ENCODE measurements at regions of chr14 and their contacts with region 1.

Region 1: DNA sequence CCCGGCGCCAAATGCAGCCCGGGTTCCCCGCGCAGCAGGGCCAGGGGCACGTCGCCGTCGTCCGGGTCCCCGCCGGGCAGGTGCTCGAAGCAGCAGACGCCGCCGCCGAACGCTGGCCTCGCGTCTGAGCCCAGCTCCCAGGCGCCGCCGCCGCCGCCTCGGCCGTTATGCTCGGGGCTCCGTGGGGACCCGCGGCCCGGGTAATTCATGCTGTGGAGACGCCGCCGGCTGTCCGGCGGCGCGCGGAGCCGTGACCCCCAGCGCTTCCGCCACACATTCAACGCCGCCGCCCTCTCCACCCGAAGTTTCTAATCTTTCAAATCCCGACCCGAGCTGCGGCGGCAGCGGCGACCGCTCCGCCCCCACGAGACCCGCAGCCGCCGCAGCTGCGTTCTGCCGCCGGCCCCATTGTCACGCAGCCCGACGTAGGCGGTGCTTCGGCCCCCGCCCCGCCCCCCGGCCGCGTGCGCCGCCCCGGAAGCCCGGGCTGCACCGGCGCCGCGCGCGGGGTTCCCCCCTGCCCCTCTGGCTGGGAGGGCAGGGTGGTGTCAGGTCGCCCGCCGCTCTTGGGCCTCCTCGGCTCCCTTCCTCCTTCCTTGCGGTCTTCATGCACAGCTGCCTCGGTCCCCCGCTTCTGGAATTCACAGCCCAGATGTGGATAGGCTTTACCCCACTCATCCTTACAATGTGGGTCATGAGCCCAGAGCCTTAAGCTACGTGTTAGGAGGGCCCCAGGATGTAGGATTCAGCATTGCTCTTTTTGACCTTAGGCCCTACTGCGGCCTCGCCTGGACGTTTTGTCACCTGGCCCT is at the start of gene DDHD1:
- DNase-seq: peak; percentile 78
- ATAC-seq: peak; percentile 77
- H3K4me3 Mint-ChIP-seq: peak within 1 kb of the TSS; percentile 81
- H3K27ac Mint-ChIP-seq: peak within 1 kb of the TSS; percentile 90
- H3K4me1 Mint-ChIP-seq: peaks cover 31% of the 10 kb centered on the region
- H3K27me3 Mint-ChIP-seq: peaks cover 10% of the 10 kb centered on the region
- CTCF ChIP-seq: no peak
- total RNA-seq, gene DDHD1: 16.1 to 20.0 TPM (median 17.2 TPM) in 3 replicates

Region 2: DNA sequence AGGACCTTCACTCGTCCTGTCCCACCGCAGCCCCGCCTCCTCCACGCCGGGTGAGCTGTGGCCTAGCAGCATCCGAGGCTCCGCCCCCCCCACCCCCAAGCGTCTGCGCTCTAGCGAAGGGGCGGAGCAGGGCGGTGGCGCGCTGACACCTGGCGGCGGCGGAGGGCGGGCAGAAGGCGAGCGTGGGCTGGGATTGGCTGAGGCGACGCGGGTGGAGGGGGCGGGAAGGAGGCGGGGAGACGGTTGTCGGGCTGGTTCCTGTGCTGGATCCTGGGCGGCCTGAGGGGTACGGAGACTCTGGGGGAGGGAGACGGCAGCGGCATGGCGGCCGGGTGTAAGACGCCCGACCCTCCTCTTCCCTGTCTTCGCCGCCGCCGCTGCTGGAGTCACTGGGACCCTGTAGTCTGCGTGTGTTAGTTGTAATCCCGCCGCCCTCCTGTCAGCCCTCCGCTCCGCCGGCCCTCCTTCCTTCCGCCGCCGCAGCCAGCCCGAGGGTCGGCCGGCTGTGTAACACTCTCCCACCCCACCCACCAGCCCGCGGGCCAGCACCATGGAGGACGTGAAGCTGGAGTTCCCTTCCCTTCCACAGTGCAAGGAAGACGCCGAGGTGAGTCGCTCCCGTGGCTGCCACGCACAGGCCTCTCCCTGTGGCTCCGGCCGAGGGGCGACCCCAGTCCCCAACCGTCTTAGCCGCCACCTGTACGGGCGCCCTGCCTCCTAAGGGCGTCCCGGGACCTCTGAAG is 423.0 kb before region 1 on chr14 and contains the start of gene STYX:
- CTCF ChIA-PET with region 1: no interaction called
- POLR2A ChIA-PET with region 1: interaction called, 11 read pairs
- DNase-seq: peak; percentile 100
- ATAC-seq: peak; percentile 95
- H3K4me3 Mint-ChIP-seq: peak within 1 kb of the TSS; percentile 99
- H3K27ac Mint-ChIP-seq: peak within 1 kb of the TSS; percentile 100
- H3K4me1 Mint-ChIP-seq: peaks cover 40% of the 10 kb centered on the region
- H3K27me3 Mint-ChIP-seq: no peaks in the 10 kb centered on the region
- CTCF ChIP-seq: no peak
- total RNA-seq, gene STYX: 21.1 to 22.8 TPM (median 21.4 TPM) in 3 replicates

Region 3: GRCh38 chr14:53113989-53114388 is 39.1 kb before region 1 on chr14:
- CTCF ChIA-PET with region 1: no interaction called
- POLR2A ChIA-PET with region 1: no interaction called
- DNase-seq: no peak
- ATAC-seq: peak; percentile 16; the same call in 1 of the 2 replicates
- H3K4me3 Mint-ChIP-seq: no peak overlapping the region
- H3K27ac Mint-ChIP-seq: no peak overlapping the region
- H3K4me1 Mint-ChIP-seq: peaks cover 18% of the 10 kb centered on the region
- H3K27me3 Mint-ChIP-seq: no peaks in the 10 kb centered on the region
- CTCF ChIP-seq: no peak

Region 4: GRCh38 chr14:53180268-53181221 is 27.4 kb after region 1 on chr14:
- CTCF ChIA-PET with region 1: interaction called, 10 read pairs
- POLR2A ChIA-PET with region 1: interaction called, 3 read pairs
- DNase-seq: peak; percentile 68
- ATAC-seq: peak; percentile 97
- H3K4me3 Mint-ChIP-seq: no peak overlapping the region
- H3K27ac Mint-ChIP-seq: no peak overlapping the region
- H3K4me1 Mint-ChIP-seq: peaks cover 37% of the 10 kb centered on the region
- H3K27me3 Mint-ChIP-seq: no peaks in the 10 kb centered on the region
- CTCF ChIP-seq: 0 out of 2 replicates have a peak, but pooled peaks have one; percentile 40

Region 5: GRCh38 chr14:53217295-53217994 is 64.3 kb after region 1 on chr14:
- CTCF ChIA-PET with region 1: interaction called, 20 read pairs
- POLR2A ChIA-PET with region 1: interaction called, 9 read pairs
- DNase-seq: peak; percentile 93
- ATAC-seq: peak; percentile 99
- H3K4me3 Mint-ChIP-seq: peak overlapping the region; percentile 78
- H3K27ac Mint-ChIP-seq: no peak overlapping the region; the same call in 1 of the 2 replicates
- H3K4me1 Mint-ChIP-seq: peaks cover 5% of the 10 kb centered on the region
- H3K27me3 Mint-ChIP-seq: no peaks in the 10 kb centered on the region
- CTCF ChIP-seq: no peak

Region 6: DNA sequence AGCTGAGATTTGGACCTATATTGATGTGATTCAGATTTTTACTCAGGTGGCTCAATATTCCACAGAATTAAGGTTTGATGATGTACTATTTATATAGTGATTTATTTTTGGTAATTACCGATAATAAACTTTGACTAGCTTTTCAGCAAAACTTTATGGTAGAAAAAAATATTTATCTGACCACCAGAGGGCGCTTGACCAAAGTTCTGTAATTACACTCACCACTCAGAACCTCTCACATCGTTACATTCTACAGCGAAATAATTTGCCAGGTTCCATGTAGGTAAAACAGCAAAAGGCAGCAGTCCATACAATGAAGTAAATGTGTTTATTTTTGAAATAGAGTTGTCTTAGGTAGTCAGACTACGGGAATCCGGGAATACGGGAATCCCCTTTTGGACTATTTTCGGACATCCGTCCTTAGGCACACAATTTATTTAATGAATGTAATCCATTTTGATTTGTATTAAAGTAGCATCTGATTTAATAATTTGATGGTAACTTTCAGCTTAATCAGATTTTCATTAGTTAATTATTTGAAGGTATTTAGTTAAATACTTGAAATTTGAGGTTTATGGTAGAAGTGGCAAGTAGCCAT is 143.0 kb after region 1 on chr14:
- CTCF ChIA-PET with region 1: interaction called, 11 read pairs
- POLR2A ChIA-PET with region 1: no interaction called
- DNase-seq: no peak
- ATAC-seq: no peak
- H3K4me3 Mint-ChIP-seq: no peak overlapping the region
- H3K27ac Mint-ChIP-seq: no peak overlapping the region
- H3K4me1 Mint-ChIP-seq: 0 out of 2 replicates have a peak, but pooled peaks cover 4% of the 10 kb centered on the region
- H3K27me3 Mint-ChIP-seq: no peaks in the 10 kb centered on the region
- CTCF ChIP-seq: peak; percentile 68